Posterior vena cava (tissue), 2 donors: ENCODE measurements at regions of chr6 and their contacts with region 1.

Region 1: DNA sequence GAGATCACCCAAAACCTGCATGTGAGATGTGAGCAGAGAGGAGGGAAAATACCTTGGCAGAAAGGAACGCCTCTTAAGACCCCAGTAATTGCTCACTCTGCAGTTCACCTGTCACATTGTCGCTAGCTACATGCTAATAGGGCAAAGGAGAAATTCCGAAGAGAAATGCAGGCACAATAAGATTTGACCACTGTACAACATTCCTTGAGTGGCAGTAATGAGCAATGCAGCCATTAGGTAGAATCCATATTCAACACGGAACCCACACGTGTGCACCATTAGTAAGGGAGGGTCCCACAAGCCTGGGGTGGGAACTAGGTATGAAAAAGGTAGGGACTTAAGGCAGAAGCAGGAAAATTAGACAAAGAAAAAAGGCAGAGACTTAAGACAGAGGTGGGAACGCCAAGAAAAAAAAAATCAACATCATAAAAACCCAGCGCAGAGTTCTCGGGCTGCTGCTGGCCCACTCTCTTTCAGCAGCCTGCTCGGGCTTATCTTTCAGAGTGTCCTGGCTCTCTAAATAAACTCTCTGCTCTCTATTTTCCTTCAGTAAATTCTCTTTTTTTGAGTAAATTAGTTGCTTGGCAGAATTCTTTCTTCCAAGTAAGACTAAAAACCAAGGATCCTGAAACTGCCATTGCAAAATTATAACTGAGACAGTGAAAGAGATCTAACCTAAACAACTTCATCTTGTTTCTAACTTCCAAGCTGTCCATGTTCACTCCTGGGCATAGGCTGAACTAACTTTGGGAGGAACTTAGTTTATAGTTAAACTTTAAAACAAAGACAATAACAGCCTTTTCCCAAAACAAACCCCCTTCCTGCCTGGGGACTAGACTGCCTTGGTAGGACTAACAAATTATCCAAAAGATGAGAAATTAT is 116.5 kb downstream of the CD24 start:
- DNase-seq: no peak

Region 2: DNA sequence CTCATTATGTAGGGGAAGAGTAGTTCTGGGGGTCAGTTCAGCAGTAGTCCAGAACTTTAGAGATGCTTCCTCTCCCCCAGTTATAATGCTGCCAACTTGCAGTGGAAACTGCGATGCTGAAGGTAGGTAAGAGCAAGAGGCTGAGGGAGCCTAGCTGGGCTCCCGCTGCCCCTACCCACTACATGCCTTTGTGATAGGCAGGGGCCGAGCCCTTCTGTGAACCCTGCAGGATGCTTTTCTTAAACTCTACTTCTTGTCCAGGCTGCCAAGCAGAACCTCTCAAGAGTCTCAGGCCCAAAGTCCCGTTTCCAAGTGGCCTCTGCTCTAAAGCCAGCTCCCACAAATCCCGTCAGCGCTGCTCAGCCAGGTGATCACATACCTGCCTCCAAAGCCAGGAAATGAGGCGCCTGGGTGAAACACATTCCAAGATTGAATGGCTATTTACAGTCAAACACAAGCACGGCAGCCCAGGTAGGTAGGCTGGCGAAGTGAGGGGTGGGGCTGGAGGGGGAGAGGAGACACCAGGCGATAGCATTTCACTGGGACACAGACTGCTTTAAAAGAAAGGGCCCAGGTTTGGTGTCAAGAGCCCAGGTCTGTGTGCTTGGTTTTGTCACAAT is 34.2 kb before region 1 on chr6:
- intact Hi-C with region 1: loop called in 1 of 2 experiments (anchors 1 kb)
- DNase-seq: no peak

Region 3: DNA sequence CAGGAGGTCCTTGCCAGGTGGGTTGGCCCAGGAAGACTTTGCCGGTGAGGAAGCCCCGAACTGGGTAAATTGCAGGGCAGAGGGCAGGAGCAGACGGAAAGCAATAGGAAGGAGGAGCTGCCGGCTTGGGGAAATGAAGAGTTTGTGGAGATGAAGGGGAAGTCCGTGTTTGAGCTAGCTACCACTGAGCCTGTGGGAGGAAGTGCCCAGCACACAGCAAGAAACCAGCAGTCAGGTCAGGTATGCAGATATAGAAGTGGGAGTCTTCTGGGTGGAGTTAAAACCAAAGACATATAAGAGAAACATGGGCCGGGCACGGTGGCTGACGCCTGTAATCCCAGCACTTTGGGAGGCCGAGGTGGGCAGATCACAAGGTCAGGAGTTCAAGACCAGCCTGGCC is 81.8 kb after region 1 on chr6:
- intact Hi-C with region 1: no loop called
- DNase-seq: no peak